BJ (cell line): ENCODE measurements at regions of chr1 and their contacts with region 1.

Region 1: DNA sequence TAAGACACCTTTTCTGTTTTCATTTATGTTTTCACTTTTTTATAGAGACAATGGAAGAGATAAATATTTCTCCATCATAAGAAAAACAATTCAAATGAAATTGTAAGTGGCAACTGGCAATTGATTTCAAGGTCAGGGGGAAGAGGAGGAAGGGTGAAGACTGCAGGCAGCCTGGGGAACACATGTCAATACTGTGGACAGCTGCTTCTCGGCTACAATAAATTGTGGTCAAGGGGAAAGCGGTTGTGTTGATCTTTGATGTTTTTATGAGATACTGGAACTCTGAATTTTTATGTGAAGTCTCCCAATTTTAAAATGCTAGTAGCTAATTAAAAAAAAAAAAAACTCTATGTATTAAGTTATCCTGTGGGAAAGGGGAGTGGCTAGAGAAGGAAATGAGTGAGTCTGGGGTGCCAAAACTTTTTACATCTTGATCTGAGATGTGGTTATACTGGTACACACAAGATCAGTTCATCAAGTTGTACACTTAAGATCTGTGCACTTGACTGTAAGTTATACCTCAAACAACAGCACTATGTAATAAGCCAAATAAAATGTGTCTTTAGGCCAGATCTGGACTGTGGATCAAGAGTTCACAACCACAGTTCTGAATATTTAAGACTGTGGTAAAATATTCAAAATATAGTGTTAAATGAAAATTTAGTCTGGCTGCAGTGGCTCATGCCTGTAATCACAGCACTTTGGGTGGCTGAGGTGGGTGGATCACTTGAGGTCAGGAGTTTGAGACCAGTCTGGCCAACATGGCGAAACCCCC is 18.0 kb downstream of the SSX2IP start:
- DNase-seq: no peak
- H3K4me3 ChIP-seq: no peak overlapping the region
- H3K27me3 ChIP-seq: no peaks in the 10 kb centered on the region
- CTCF ChIP-seq: no peak

Region 2: DNA sequence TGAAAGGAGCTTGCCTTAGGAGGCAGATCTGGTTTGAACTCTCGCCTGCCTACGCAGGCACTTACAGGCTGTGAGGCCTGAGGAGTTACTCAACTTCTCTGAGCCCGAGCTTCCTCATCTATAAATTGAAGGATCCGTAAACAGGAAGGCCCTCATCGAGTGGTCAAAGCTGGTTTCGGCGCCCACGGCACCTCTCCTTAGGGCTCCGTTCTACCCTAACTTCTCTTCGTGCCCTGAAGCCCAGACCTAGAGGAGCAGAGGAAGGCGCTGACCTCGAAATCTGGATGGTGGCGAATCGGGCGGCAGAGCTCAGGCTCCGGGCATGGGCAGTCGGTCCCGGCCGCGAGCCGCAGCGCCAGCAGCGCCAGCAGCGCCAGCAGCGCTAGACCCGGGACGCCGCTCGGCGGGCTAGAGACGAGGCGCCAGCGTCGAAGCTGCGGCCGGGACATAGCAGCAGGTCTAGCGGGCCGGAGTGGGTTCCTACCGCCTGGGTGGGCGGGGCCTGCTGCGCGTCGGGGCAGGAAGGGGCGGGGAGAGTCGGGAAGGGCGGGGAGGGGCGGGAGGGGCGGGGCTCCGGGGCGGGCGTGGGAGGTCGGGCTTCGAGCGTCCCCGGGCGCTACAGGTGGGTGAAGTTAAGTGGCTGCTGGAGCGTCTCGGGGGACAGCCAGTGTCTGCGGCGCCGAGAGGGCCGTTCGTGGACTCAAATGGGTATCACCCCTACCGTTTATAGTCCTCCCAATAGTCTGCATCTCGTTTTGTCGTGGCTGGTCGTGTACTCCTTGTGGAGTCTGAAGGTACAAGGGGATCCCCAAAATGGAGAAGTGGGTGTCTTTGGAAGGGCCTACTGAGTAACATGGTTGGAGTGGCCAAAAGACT is 98.1 kb before region 1 on chr1 and contains the start of gene CTBS:
- CTCF ChIA-PET with region 1: no interaction called
- POLR2A ChIA-PET with region 1: interaction called, 14 read pairs
- DNase-seq: peak; percentile 23
- H3K4me3 ChIP-seq: peak within 1 kb of the TSS; percentile 78
- H3K27me3 ChIP-seq: no peaks in the 10 kb centered on the region
- CTCF ChIP-seq: no peak
- polyA plus RNA-seq, gene CTBS: 14.4 and 25.3 TPM in 2 replicates